ENCODE measurements at regions of chr17 and their contacts with region 1.

Region 1: GRCh38 chr17:77957857-77958715 is at the start of gene TNRC6C:
- DNase-seq: peak; percentile 98 to 100 (median 100)
- ATAC-seq: peak; percentile 96
- H3K4me3 ChIP-seq: peak within 1 kb of the TSS; percentile 79
- H3K4me3 Mint-ChIP-seq: peak within 1 kb of the TSS; percentile 93 to 100 (median 96)
- H3K27ac ChIP-seq: peak within 1 kb of the TSS; percentile 82
- H3K27ac Mint-ChIP-seq: peak within 1 kb of the TSS; percentile 82 to 98 (median 95)
- H3K4me1 ChIP-seq: peaks cover 26 to 35% of the 10 kb centered on the region in 2 donors
- H3K4me1 Mint-ChIP-seq: peaks cover 26 to 43% (median 36%) of the 10 kb centered on the region in 7 donors
- H3K27me3 ChIP-seq: no peaks in the 10 kb centered on the region
- H3K27me3 Mint-ChIP-seq: peaks cover 0 to 46% (median 0%) of the 10 kb centered on the region in 5 donors
- total RNA-seq, gene TNRC6C: 28.6 to 133 (median 104) TPM

Region 2: GRCh38 chr17:76737082-76737675 is 1220.9 kb before region 1 on chr17 and contains the start of gene SRSF2:
- CTCF ChIA-PET with region 1: no interaction called
- POLR2A ChIA-PET with region 1: interaction called, 6 read pairs
- intact Hi-C with region 1: loop called in 1 of 2 experiments (anchors 2 kb)
- DNase-seq: peak; percentile 98 to 100 (median 99)
- ATAC-seq: peak; percentile 86
- H3K4me3 ChIP-seq: peak within 1 kb of the TSS; percentile 97
- H3K4me3 Mint-ChIP-seq: peak within 1 kb of the TSS; percentile 90 to 99 (median 97)
- H3K27ac ChIP-seq: peak within 1 kb of the TSS; percentile 96
- H3K27ac Mint-ChIP-seq: peak within 1 kb of the TSS; percentile 95 to 100 (median 99)
- H3K4me1 ChIP-seq: peaks cover 45 to 49% of the 10 kb centered on the region in 2 donors
- H3K4me1 Mint-ChIP-seq: peaks cover 26 to 66% (median 58%) of the 10 kb centered on the region in 7 donors
- H3K27me3 ChIP-seq: no peaks in the 10 kb centered on the region
- H3K27me3 Mint-ChIP-seq: no peaks in the 10 kb centered on the region
- total RNA-seq, gene SRSF2: 327 to 363 (median 351) TPM

Region 3: DNA sequence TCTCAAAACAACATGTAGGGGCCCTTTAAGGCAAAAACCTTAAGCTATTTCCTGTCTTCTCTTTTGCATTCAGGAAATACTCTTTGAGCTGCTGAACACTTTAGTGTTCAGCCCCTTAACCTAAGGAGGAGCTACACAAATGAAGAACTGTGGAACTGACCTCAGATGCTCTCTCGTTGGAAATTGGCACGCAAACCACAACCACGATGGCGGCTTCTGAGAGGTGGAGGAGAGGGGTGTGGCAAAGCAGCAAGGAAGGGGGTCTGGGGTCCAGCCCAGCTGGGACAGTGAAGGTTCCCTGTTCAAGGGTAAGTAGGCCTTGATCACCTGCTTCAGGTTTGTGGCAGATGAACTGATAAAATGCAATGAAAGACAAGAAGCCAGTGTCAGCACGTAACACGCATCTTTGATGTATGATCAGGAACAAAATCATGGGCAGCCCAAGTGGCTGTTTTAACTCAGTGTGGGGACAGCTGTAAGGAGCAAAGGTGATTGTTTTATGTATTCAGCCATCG is 291.1 kb before region 1 on chr17:
- CTCF ChIA-PET with region 1: no interaction called
- POLR2A ChIA-PET with region 1: interaction called, 28 read pairs
- intact Hi-C with region 1: loop called (anchors 2 kb)
- DNase-seq: peak; percentile 37 to 87 (median 83)
- ATAC-seq: peak; percentile 90
- H3K4me3 ChIP-seq: peak overlapping the region; percentile 55
- H3K4me3 Mint-ChIP-seq: peak overlapping the region; percentile 80 to 97 (median 93)
- H3K27ac ChIP-seq: peak overlapping the region; percentile 75
- H3K27ac Mint-ChIP-seq: peak overlapping the region; percentile 96 to 99 (median 98)
- H3K4me1 ChIP-seq: peaks cover 26 to 40% of the 10 kb centered on the region in 2 donors
- H3K4me1 Mint-ChIP-seq: peaks cover 37 to 74% (median 64%) of the 10 kb centered on the region in 7 donors
- H3K27me3 ChIP-seq: no peaks in the 10 kb centered on the region
- H3K27me3 Mint-ChIP-seq: no peaks in the 10 kb centered on the region

Region 4: DNA sequence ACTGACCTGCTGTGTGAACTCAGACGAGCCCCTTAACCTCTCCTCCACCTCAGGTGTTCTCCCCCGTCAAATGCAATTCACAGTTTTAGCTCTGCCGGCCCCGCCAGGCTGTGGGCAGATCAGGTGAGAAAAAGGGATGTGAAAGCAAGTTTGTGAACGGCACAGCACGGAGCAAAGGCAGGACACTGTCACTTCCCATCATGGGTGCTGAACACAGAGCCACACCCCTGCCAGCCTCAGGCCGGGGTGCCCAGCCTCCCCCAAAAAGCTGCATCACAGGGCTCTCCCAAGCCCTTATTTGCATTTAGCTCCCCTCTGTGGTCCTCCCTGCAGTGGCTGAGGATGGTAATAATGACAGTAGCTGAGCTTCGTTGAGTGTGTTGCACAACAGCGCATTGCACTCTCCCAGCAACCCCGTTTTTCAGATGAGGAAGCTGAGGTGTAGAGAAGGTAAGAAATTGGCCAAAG is 88.4 kb before region 1 on chr17:
- CTCF ChIA-PET with region 1: interaction called, 5 read pairs
- POLR2A ChIA-PET with region 1: interaction called, 13 read pairs
- intact Hi-C with region 1: no loop called
- DNase-seq: no peak
- ATAC-seq: peak; percentile 91
- H3K4me3 ChIP-seq: no peak overlapping the region
- H3K4me3 Mint-ChIP-seq: peak overlapping the region in 9 of 10 donors; percentile 25 to 68 (median 53)
- H3K27ac ChIP-seq: no peak overlapping the region
- H3K27ac Mint-ChIP-seq: peak overlapping the region in 5 of 9 donors; percentile 3 to 73 (median 47)
- H3K4me1 ChIP-seq: peaks cover 29 to 48% of the 10 kb centered on the region in 2 donors
- H3K4me1 Mint-ChIP-seq: peaks cover 37 to 66% (median 55%) of the 10 kb centered on the region in 7 donors
- H3K27me3 ChIP-seq: no peaks in the 10 kb centered on the region
- H3K27me3 Mint-ChIP-seq: peaks cover 0 to 29% (median 0%) of the 10 kb centered on the region in 5 donors

Region 5: GRCh38 chr17:77968788-77969187 is 10.7 kb after region 1 on chr17:
- CTCF ChIA-PET with region 1: no interaction called
- POLR2A ChIA-PET with region 1: interaction called, 55 read pairs
- intact Hi-C with region 1: no loop called
- DNase-seq: no peak
- ATAC-seq: no peak
- H3K4me3 ChIP-seq: no peak overlapping the region
- H3K4me3 Mint-ChIP-seq: peak overlapping the region in 7 of 10 donors; percentile 36 to 66 (median 55)
- H3K27ac ChIP-seq: no peak overlapping the region
- H3K27ac Mint-ChIP-seq: peak overlapping the region in 1 of 9 donors; percentile 17
- H3K4me1 ChIP-seq: peaks cover 43 to 55% of the 10 kb centered on the region in 2 donors
- H3K4me1 Mint-ChIP-seq: peaks cover 20 to 98% (median 88%) of the 10 kb centered on the region in 7 donors
- H3K27me3 ChIP-seq: no peaks in the 10 kb centered on the region
- H3K27me3 Mint-ChIP-seq: no peaks in the 10 kb centered on the region

Region 6: DNA sequence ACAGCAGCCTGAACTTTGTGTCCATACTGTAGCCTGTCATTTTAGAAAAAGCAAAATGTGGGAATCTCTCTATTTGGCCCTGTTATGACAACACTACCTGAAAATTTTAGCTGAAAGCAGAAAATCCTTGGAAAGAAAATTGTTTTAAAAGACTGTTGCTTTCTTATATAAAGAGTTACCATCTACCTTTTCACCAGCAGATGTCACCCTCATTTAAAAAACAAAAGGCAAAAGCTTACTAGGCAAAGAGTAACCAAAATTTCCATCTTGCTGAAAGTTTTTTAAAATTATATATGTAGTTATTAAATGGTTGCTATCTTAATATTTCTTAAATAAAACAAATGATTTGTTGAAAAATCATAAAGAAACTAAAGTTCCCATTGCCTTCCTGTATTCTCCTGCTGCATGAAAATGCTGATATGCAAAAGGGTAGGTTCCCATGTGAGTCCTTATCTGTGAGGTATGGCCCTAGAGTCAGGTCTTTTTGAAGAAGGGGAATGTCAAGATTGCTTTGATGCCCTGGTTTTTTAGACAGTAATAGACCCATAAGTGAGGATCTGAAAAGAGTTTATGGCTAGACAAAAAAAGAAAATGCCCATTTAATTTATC is 61.4 kb after region 1 on chr17:
- CTCF ChIA-PET with region 1: interaction called, 11 read pairs
- POLR2A ChIA-PET with region 1: interaction called, 75 read pairs
- intact Hi-C with region 1: loop called (anchors 1 to 2 kb)
- DNase-seq: peak in 5 of 9 donors; percentile 20 to 37 (median 26)
- ATAC-seq: no peak
- H3K4me3 ChIP-seq: no peak overlapping the region
- H3K4me3 Mint-ChIP-seq: peak overlapping the region in 2 of 10 donors; percentile 7 to 37
- H3K27ac ChIP-seq: no peak overlapping the region
- H3K27ac Mint-ChIP-seq: peak overlapping the region in 6 of 9 donors; percentile 1 to 89 (median 38)
- H3K4me1 ChIP-seq: peaks cover 11 to 15% of the 10 kb centered on the region in 2 donors
- H3K4me1 Mint-ChIP-seq: peaks cover 14 to 45% (median 28%) of the 10 kb centered on the region in 7 donors
- H3K27me3 ChIP-seq: no peaks in the 10 kb centered on the region
- H3K27me3 Mint-ChIP-seq: no peaks in the 10 kb centered on the region

Region 7: GRCh38 chr17:78840725-78841611 is 882.9 kb after region 1 on chr17 and contains the start of gene USP36:
- CTCF ChIA-PET with region 1: no interaction called
- POLR2A ChIA-PET with region 1: no interaction called
- intact Hi-C with region 1: loop called in 1 of 2 experiments (anchors 2 kb)
- DNase-seq: peak; percentile 98 to 100 (median 99)
- ATAC-seq: peak; percentile 91
- H3K4me3 ChIP-seq: peak within 1 kb of the TSS; percentile 80
- H3K4me3 Mint-ChIP-seq: peak within 1 kb of the TSS; percentile 90 to 97 (median 95)
- H3K27ac ChIP-seq: peak within 1 kb of the TSS; percentile 99
- H3K27ac Mint-ChIP-seq: peak within 1 kb of the TSS; percentile 90 to 100 (median 98)
- H3K4me1 ChIP-seq: peaks cover 18 to 31% of the 10 kb centered on the region in 2 donors
- H3K4me1 Mint-ChIP-seq: peaks cover 38 to 60% (median 49%) of the 10 kb centered on the region in 7 donors
- H3K27me3 ChIP-seq: no peaks in the 10 kb centered on the region
- H3K27me3 Mint-ChIP-seq: no peaks in the 10 kb centered on the region
- total RNA-seq, gene USP36: 107 to 414 (median 154) TPM